K562 (cell line): ENCODE measurements at regions of chrX and their contacts with region 1.

Region 1: GRCh38 chrX:48737213-48737938 is 24.2 kb upstream of the GLOD5 start:
- DNase-seq: peak; percentile 97 to 98 (median 98)
- ATAC-seq: peak; percentile 98
- H3K4me3 ChIP-seq: peak overlapping the region; percentile 58
- H3K27ac ChIP-seq: peak overlapping the region; percentile 89
- H3K4me1 ChIP-seq: peaks cover 7 to 19% of the 10 kb centered on the region in 2 experiments; a peak in 4 of 5 replicates
- H3K27me3 ChIP-seq: no peaks in the 10 kb centered on the region
- CTCF ChIP-seq: no peak
- EP300 ChIP-seq: no peak
- POLR2A ChIP-seq: peak; percentile 86
- RAD21 ChIP-seq: no peak

Region 2: GRCh38 chrX:47030339-47030738 is 1707.0 kb before region 1 on chrX:
- CTCF ChIA-PET with region 1: no interaction called
- POLR2A ChIA-PET with region 1: no interaction called
- in situ Hi-C with region 1: no loop called
- intact Hi-C with region 1: no loop called
- DNase-seq: peak; percentile 30 to 69 (median 37)
- ATAC-seq: peak; percentile 56; the same call in 2 of the 3 replicates
- H3K4me3 ChIP-seq: no peak overlapping the region
- H3K27ac ChIP-seq: no peak overlapping the region
- H3K4me1 ChIP-seq: no peaks in the 10 kb centered on the region
- H3K27me3 ChIP-seq: no peaks in the 10 kb centered on the region
- CTCF ChIP-seq: peak; percentile 40 to 65 (median 46); a peak in 4 of 6 replicates
- EP300 ChIP-seq: no peak
- POLR2A ChIP-seq: no peak
- RAD21 ChIP-seq: peak; percentile 43 to 74

Region 3: GRCh38 chrX:48703642-48704481 is 33.5 kb before region 1 on chrX:
- CTCF ChIA-PET with region 1: no interaction called
- POLR2A ChIA-PET with region 1: interaction called, 4 read pairs
- in situ Hi-C with region 1: no loop called
- intact Hi-C with region 1: loop called (anchors 5 kb)
- DNase-seq: no peak
- ATAC-seq: no peak
- H3K4me3 ChIP-seq: no peak overlapping the region
- H3K27ac ChIP-seq: no peak overlapping the region
- H3K4me1 ChIP-seq: peaks cover 24 to 33% of the 10 kb centered on the region in 2 experiments
- H3K27me3 ChIP-seq: no peaks in the 10 kb centered on the region
- CTCF ChIP-seq: no peak
- EP300 ChIP-seq: no peak
- POLR2A ChIP-seq: no peak
- RAD21 ChIP-seq: no peak

Region 4: GRCh38 chrX:48794911-48795501 is 57.6 kb after region 1 on chrX:
- CTCF ChIA-PET with region 1: no interaction called
- POLR2A ChIA-PET with region 1: no interaction called
- in situ Hi-C with region 1: no loop called
- intact Hi-C with region 1: loop called (anchors 2 kb)
- DNase-seq: peak in 3 of 4 experiments; percentile 28 to 79 (median 60)
- ATAC-seq: peak; percentile 66
- H3K4me3 ChIP-seq: no peak overlapping the region
- H3K27ac ChIP-seq: peak overlapping the region; percentile 92
- H3K4me1 ChIP-seq: peaks cover 62 to 82% of the 10 kb centered on the region in 2 experiments
- H3K27me3 ChIP-seq: no peaks in the 10 kb centered on the region
- CTCF ChIP-seq: no peak
- EP300 ChIP-seq: peak; percentile 44; the same call in 1 of the 2 replicates
- POLR2A ChIP-seq: peak; percentile 58; the same call in 1 of the 2 replicates
- RAD21 ChIP-seq: no peak